ENCODE measurements at regions of chr6 and their contacts with region 1.

Region 1: DNA sequence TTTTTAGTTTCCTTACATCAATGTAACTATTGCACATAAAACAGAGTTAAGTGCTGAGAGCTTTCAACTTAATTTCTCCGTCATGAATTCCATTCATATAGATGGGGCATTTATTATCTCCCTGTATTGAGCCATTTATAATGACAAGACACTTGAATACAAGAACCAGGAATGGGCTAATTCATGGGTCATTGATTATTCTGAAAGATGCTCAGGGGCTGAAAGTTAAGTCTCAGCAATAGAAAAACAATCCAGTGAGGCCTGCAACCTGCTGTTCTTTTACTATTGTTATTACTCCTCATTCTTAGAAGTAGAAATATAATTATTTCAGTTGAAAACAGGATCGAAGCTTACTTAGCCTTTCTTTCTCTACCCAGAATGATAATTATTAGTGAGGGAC is 307.7 kb downstream of the MMUT start:
- DNase-seq: no peak
- H3K4me3 Mint-ChIP-seq: no peak overlapping the region
- H3K27ac Mint-ChIP-seq: no peak overlapping the region
- H3K4me1 Mint-ChIP-seq: no peaks in the 10 kb centered on the region
- H3K27me3 Mint-ChIP-seq: no peaks in the 10 kb centered on the region

Region 2: DNA sequence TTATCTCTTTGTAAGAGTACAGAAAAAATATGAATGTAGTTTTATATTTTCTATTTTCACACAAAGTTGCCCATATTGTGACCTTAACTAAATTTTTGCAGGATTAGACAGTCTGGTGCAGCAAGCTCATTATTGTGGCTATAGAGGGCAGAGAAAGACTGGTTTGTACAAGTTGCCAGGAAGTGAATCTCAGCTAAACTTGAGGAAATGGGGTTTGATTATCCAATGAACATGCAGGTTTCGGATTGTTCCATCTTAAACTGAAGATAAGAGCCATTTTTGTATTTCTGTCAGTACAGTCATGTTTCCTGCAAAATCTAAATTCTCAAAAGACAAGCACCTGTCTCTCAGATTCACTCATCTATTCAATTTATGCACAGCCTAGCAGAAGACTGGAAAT is 83.2 kb before region 1 on chr6:
- intact Hi-C with region 1: no loop called
- DNase-seq: no peak
- H3K4me3 Mint-ChIP-seq: no peak overlapping the region
- H3K27ac Mint-ChIP-seq: no peak overlapping the region
- H3K4me1 Mint-ChIP-seq: no peaks in the 10 kb centered on the region
- H3K27me3 Mint-ChIP-seq: no peaks in the 10 kb centered on the region

Region 3: DNA sequence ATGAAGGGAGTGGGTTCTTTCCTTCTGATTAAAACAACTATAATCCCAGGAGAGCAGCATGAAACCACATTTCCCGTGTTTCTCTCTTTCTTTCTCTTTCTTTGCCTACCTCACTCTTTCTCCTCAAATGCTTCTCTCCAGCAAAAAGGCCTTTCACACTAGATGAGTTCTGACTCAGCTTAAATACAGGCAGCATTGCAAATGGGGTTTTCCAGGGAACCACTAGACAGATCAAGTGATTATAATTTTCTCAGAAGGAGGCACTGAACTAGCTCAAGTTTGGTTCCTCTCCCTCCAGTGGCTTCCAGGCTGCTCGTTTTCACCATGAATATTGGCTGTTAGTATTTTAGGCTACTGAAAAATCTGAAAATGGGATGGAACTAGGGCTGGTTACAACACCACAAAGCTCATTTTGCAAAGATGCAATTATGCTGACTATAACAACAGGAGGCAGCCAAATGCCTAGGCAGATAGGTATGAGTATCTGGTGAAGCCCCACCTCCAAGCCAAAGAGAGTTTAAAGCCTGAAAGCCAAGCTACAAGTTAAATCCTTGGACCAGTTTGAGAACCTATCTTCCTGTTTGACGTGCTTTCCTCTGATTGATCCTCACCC is 47.7 kb after region 1 on chr6:
- intact Hi-C with region 1: no loop called
- DNase-seq: no peak
- H3K4me3 Mint-ChIP-seq: no peak overlapping the region
- H3K27ac Mint-ChIP-seq: no peak overlapping the region
- H3K4me1 Mint-ChIP-seq: no peaks in the 10 kb centered on the region
- H3K27me3 Mint-ChIP-seq: no peaks in the 10 kb centered on the region

Region 4: DNA sequence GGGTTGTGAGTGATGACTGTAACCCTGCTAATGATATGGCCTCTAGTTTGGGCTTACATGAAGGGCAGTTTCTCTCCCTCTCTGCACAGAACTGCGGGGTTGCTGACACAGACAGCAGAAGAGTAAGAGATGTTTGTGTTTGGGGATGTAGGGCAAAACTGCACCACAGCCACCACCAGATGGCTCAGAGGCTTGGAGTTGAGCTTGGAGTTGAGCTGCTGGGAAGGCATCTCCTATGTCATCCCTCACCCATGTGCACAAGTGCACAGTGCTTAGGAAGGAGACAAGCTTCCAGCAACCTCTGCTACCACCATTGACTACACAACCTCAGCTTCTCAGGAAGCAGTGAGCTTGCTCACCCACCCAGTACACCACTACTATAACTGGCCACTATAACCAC is 1198.3 kb after region 1 on chr6:
- intact Hi-C with region 1: loop called (anchors 5 kb)
- DNase-seq: no peak
- H3K4me3 Mint-ChIP-seq: no peak overlapping the region
- H3K27ac Mint-ChIP-seq: no peak overlapping the region
- H3K4me1 Mint-ChIP-seq: no peaks in the 10 kb centered on the region
- H3K27me3 Mint-ChIP-seq: no peaks in the 10 kb centered on the region